ENCODE measurements at regions of chr7 and their contacts with region 1.

Region 1: GRCh38 chr7:74514131-74514591 is 60.5 kb downstream of the GTF2IRD1 start:
- DNase-seq: no peak
- H3K4me3 ChIP-seq: no peak overlapping the region
- CTCF ChIP-seq: no peak

Region 2: DNA sequence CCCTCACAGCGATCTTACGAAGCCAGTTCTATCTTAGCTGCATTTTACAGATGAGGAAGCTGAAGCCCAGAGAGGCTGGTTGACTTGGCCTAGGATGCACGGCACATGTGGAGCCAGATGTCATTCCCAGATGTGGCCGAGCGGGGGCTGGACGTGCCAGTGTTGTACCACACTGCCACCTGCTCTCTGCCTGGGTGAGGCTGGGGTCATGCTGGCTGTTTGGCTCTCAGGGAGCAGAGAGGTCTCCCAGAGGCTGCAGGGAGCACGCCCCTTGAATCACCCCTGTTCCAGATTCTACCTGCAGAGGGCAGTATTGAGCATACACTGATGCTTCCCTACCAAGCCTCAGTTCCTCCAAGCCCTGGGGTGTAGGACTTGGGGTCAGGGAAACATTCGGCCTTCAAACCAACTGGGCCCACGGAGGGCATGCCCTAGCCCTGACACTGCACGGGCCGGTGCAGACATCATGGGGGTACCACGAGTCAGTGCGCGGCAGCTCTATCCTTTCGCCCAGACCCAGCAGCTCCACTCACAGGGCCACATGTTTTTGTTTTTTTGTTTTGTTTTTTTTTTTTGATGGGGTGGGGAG is 64.3 kb before region 1 on chr7:
- in situ Hi-C with region 1: loop called (anchors 5 kb)
- DNase-seq: peak; percentile 22
- H3K4me3 ChIP-seq: no peak overlapping the region
- CTCF ChIP-seq: peak; percentile 73

Region 3: DNA sequence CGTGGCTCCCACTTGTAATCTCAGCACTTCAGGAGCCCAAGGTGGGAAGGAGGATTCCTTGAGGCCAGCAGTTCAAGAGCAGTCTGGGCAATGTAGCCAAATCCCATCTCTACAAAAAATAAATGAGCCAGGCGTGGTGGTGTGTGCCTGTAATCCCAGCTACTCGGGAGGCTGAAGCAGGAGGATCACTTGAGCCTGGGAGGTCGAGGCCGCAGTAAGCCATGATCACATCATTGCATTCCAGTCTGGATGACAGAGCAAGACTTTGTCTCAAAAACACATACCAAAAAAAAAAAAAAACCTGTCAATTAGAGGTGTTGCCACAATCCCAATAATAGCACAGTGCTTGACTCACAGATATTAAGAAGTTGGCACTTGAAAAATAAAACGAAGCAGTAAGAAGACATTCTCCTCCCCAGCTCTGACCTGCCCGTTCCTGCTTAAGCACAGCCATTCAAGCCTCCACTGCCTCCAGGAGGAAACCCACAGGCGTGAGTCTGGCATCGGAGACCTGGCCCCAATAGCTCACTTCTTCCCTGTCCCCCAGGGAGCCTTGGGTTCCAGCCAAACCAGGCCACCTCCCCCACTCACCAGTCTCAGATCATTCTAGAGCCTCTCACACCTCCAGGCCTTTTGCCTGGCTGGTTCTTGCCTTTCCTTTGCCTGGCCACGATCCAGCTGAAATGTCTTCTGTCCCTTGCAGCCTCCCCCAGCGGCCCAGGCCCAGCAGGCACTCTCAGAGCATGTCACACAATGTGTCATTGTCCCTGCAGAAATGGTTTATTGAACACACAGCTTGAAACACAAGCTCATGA is 98.1 kb after region 1 on chr7:
- in situ Hi-C with region 1: no loop called
- DNase-seq: peak; percentile 54
- H3K4me3 ChIP-seq: no peak overlapping the region
- CTCF ChIP-seq: no peak

Region 4: DNA sequence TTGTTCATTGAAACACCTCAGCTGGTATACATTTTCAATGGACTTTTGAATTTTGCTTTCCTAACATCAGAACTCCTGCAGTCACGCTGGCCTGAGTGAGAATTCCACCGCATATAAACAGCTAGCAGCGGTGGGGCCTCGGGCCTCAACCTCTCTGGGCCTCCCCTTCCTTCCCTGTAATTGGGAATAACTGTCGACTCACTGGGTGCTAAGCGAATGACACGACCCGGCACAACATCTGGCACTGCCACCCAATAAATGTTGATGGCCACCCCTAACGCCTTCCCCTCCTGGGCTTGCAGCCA is 558.8 kb after region 1 on chr7:
- in situ Hi-C with region 1: no loop called
- DNase-seq: no peak
- H3K4me3 ChIP-seq: peak overlapping the region; percentile 86
- CTCF ChIP-seq: no peak

Measured in astrocyte of the cerebellum (primary cell).